ENCODE measurements at regions of chr12 and their contacts with region 1.

Region 1: DNA sequence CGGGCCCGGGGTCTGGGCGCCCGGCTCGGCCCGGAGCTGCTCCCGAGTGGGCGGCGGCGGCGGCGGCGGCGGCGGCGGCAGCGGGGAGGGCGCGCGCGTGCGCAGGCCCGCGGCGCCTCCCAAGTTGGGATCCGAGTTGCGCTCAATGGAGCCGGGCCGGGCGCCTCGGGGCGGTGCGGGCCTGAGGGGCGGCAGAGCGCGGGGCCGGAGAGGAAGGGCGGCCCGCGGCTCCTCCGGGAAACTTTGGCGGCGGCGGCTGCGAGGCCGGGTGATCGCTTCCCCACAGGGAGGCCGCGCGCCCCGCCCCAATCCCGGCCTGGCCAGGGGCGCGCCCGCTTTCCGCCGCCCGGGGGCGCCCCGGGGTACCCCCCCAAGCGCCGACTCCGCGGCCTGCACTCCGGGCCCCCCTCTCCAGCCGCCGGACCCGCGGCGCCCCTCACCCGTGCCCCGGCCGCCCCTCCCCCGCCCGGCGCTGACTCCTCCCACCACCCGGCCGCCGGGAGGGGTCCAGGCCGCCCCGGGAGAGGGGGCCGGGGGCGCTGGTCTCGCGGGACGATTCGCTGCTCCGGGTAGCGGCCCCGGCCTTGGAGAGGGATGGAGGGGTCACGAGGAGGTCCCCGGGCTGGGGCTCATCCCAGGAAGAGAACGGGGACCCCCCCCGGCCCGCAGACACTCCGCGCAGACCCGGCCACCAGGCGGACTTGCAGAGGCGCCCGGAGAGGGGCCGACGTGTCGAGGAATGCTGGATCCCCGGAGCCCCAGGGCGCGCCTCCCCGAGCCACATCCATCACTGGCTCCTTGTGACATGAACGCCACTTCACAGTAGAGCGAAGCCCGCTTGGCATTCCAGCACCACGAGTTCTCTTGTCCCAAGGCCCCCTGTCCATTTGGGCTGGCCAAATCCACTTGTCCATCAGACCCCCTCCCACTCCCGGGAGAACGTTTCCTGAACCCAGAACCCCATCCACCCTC is at the start of gene RILPL1:
- DNase-seq: peak; percentile 83
- ATAC-seq: peak; percentile 67
- total RNA-seq, gene RILPL1: 94.3 TPM

Region 2: DNA sequence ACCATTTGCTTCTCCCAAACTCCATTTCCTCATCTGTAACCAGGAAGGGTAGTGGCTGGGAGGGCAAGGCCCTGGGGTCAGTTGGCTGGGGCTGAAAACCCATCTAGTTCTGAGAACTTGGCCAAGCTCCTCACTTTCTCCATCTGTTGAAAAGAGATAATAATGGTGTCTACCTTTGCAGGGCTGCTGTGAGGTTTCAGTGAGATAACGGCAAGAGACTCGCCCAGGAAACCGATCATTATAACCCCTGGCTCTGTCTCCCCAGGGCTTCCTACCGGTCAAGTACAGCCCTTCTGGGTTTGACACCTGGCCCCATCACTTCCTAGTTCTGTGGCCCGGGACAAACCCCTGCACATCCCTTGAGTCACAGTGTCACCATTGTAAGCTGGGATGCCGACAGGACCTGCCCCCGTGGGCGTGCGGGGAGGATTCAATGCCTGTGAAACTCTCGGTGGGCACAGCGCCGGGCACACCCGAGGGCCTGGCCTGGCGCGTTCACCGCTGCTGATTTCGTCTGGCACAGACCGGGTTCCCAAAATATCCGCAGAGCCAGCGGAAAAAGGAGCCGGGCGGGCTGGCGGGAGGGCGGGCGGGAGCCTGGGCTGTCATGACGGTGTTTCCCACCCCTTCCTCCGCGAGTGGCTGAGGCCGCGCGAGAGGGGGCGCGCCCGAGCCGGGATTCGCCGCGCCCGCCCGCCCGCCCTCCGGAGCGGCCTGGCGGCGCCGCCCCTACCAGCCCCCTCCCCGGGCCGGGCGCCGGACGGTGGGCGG is 145.6 kb before region 1 on chr12:
- intact Hi-C with region 1: loop called (anchors 5 kb)
- DNase-seq: peak; percentile 91
- ATAC-seq: peak; percentile 68

Region 3: GRCh38 chr12:123580772-123581171 is 46.8 kb after region 1 on chr12:
- intact Hi-C with region 1: loop called (anchors 2 kb)
- DNase-seq: no peak
- ATAC-seq: no peak